Activated CD4-positive, alpha-beta T cell treated with anti-CD3 and anti-CD28 coated beads for 36 hours (primary cell): ENCODE measurements at regions of chr10 and their contacts with region 1.

Region 1: GRCh38 chr10:92290837-92291615 is at the starts of genes CPEB3 and MARCHF5:
- DNase-seq: peak; percentile 97
- ATAC-seq: peak; percentile 98
- H3K4me3 Mint-ChIP-seq: peak within 1 kb of the TSS; percentile 75
- H3K27ac Mint-ChIP-seq: peak within 1 kb of the TSS; percentile 80
- H3K4me1 Mint-ChIP-seq: peaks cover 21% of the 10 kb centered on the region
- H3K27me3 Mint-ChIP-seq: no peaks in the 10 kb centered on the region
- total RNA-seq, gene CPEB3: 1.4 to 1.8 TPM
- total RNA-seq, gene MARCHF5: 11.7 to 25.9 TPM

Region 2: GRCh38 chr10:91923371-91924211 is 367.4 kb before region 1 on chr10 and contains the start of gene BTAF1:
- CTCF ChIA-PET with region 1: no interaction called
- POLR2A ChIA-PET with region 1: interaction called, 4 read pairs
- intact Hi-C with region 1: loop called in 1 of 2 experiments (anchors 1 kb)
- DNase-seq: peak; percentile 96
- ATAC-seq: peak; percentile 96
- H3K4me3 Mint-ChIP-seq: peak within 1 kb of the TSS; percentile 97
- H3K27ac Mint-ChIP-seq: peak within 1 kb of the TSS; percentile 99
- H3K4me1 Mint-ChIP-seq: peaks cover 37% of the 10 kb centered on the region
- H3K27me3 Mint-ChIP-seq: peaks cover 2% of the 10 kb centered on the region
- total RNA-seq, gene BTAF1: 59.0 to 59.4 TPM

Region 3: DNA sequence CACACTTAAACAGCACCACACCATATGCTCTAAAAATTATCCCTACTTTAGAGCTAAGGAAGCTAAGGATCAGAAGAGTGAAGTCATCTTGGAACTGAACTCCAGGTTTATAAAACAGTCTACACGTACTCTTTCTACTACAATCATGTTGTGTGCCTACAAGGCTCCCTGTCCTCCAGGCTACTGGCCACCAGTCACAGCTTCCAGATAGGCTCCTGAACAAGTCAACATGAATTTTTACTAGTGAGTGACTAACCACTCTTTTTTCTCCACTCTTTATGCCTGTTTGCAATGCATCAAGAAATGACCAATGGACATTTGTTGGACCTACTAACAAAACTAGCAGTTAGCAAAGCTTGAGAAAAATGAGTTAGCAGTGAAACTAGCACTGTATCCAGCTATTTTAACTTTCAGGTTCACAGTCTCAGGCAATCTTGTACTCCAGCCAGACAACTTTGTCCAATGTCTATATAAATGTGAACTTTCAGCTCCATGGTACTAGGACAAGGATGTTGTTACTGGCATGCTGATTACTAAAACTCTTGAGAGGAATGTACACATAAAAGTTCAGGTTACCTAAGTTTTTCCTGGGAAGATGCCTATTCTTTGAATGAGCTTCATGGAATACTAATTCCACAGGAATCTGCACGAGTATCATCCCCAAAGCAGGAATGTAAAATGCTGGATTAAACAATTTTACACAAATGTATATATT is 187.5 kb before region 1 on chr10:
- CTCF ChIA-PET with region 1: interaction called, 4 read pairs
- POLR2A ChIA-PET with region 1: no interaction called
- intact Hi-C with region 1: loop called (anchors 1 to 5 kb)
- DNase-seq: no peak
- ATAC-seq: no peak
- H3K4me3 Mint-ChIP-seq: no peak overlapping the region
- H3K27ac Mint-ChIP-seq: no peak overlapping the region
- H3K4me1 Mint-ChIP-seq: peaks cover 15% of the 10 kb centered on the region
- H3K27me3 Mint-ChIP-seq: no peaks in the 10 kb centered on the region

Region 4: GRCh38 chr10:92240289-92241157 is 50.5 kb before region 1 on chr10:
- CTCF ChIA-PET with region 1: interaction called, 3 read pairs
- POLR2A ChIA-PET with region 1: no interaction called
- intact Hi-C with region 1: loop called (anchors 2 kb)
- DNase-seq: peak; percentile 33
- ATAC-seq: peak; percentile 28
- H3K4me3 Mint-ChIP-seq: peak overlapping the region; percentile 72
- H3K27ac Mint-ChIP-seq: peak overlapping the region; percentile 2
- H3K4me1 Mint-ChIP-seq: peaks cover 30% of the 10 kb centered on the region
- H3K27me3 Mint-ChIP-seq: peaks cover 14% of the 10 kb centered on the region

Region 5: DNA sequence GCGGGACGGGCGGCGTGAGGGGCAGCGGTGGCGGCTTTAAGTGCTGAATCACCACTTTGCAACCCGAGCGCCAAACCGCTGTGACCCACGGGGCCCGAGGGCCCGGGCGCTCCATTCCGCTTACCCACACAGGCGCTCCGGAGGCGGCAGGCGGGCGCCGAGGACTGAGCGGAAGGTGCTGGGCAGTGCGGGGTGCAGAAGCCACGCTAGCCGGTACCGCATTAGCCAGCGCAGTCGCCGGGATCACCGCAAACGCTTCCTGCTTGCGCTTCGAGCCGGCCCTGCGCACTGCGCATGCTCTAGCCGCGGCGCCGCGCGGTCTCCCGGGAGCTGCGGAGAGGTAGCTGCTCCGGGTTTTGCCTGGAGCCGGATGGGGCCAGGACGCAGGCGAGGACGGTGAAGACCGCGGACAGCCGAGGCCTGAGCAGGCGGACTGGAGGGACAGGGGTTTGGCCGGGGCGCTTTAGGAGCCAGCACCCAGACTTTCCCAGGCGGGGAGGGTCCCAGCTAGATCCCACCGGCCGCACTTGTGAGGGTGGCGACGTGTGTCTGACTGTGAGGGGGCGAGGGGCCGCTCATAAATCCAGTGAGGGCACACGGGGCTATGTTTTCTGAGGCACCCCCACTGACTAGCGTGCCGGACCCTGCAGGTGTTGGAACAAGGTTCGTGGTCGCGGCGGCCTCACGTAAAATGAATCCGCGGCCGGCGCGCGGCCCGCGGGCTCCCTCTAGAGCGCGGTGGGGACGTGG is 282.9 kb after region 1 on chr10 and contains the start of gene IDE:
- CTCF ChIA-PET with region 1: no interaction called
- POLR2A ChIA-PET with region 1: interaction called, 4 read pairs
- intact Hi-C with region 1: loop called in 1 of 2 experiments (anchors 1 kb)
- DNase-seq: peak; percentile 90
- ATAC-seq: peak; percentile 85
- H3K4me3 Mint-ChIP-seq: peak within 1 kb of the TSS; percentile 77
- H3K27ac Mint-ChIP-seq: peak within 1 kb of the TSS; percentile 88
- H3K4me1 Mint-ChIP-seq: peaks cover 38% of the 10 kb centered on the region
- H3K27me3 Mint-ChIP-seq: no peaks in the 10 kb centered on the region
- total RNA-seq, gene IDE: 30.8 to 35.5 TPM